ENCODE measurements at regions of chr4 and their contacts with region 1.

Region 1: DNA sequence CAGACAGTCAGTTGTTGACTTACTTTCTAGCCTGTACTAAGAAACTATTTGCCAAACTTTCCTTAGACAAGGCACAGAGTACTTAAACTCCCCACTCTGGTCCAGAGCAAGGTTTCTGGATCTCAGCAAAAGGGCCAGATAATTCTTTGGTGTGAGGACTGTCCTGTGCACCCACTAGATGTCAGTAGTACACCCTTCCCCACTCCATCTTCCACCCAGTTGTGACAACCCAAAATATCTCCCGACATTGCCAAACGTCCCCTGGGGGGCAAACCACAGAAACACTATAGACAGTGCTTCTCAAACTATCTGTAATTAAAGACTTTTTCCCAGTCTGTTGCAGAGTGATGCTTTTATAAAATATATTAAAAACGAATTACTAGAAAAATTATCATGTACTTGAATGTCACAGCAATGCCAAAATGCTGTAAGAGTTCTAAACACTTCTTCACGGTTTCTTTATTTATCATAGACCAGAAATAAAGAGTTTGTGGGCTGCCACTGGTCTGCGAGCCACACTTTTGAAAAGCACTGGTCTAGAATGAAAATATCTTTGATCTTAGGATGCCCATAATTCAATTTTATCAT is 203.5 kb downstream of the PRDM5 start:
- DNase-seq: peak in 4 of 14 experiments; percentile 17 to 53 (median 37)
- ATAC-seq: no peak
- H3K4me3 ChIP-seq: no peak overlapping the region
- H3K4me3 Mint-ChIP-seq: no peak overlapping the region
- H3K27ac ChIP-seq: no peak overlapping the region
- H3K27ac Mint-ChIP-seq: no peak overlapping the region
- H3K4me1 ChIP-seq: no peaks in the 10 kb centered on the region
- H3K4me1 Mint-ChIP-seq: no peaks in the 10 kb centered on the region
- H3K27me3 ChIP-seq: no peaks in the 10 kb centered on the region
- H3K27me3 Mint-ChIP-seq: peaks cover 15% of the 10 kb centered on the region
- CTCF ChIP-seq: peak; percentile 51

Region 2: GRCh38 chr4:120472447-120473131 is 246.5 kb before region 1 on chr4:
- CTCF ChIA-PET with region 1: no interaction called
- POLR2A ChIA-PET with region 1: no interaction called
- intact Hi-C with region 1: no loop called
- DNase-seq: no peak
- ATAC-seq: no peak
- H3K4me3 ChIP-seq: no peak overlapping the region
- H3K4me3 Mint-ChIP-seq: no peak overlapping the region
- H3K27ac ChIP-seq: no peak overlapping the region
- H3K27ac Mint-ChIP-seq: no peak overlapping the region
- H3K4me1 ChIP-seq: no peaks in the 10 kb centered on the region
- H3K4me1 Mint-ChIP-seq: no peaks in the 10 kb centered on the region
- H3K27me3 ChIP-seq: no peaks in the 10 kb centered on the region
- H3K27me3 Mint-ChIP-seq: no peaks in the 10 kb centered on the region
- CTCF ChIP-seq: no peak

Region 3: DNA sequence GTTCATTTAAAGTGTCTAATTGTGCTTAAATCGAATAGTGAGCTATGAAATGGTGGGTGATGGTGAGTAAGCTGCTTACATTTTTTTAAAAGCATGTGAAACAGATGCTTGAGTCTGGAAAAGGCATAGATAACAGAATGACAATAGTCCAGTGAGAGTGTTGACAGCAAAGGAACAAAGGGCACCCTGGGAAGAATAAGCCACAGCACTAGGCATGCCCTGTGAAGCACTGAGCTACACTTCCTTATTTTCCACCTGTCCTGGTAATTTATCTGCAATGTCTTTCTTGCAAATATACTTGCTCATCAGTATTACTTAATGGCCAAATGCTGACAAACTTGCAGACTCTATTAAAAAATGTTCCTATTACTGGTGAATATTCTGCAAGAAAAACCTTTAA is 34.8 kb after region 1 on chr4:
- CTCF ChIA-PET with region 1: no interaction called
- POLR2A ChIA-PET with region 1: no interaction called
- intact Hi-C with region 1: no loop called
- DNase-seq: no peak
- ATAC-seq: no peak
- H3K4me3 ChIP-seq: no peak overlapping the region
- H3K4me3 Mint-ChIP-seq: no peak overlapping the region
- H3K27ac ChIP-seq: no peak overlapping the region
- H3K27ac Mint-ChIP-seq: no peak overlapping the region
- H3K4me1 ChIP-seq: no peaks in the 10 kb centered on the region
- H3K4me1 Mint-ChIP-seq: no peaks in the 10 kb centered on the region
- H3K27me3 ChIP-seq: no peaks in the 10 kb centered on the region
- H3K27me3 Mint-ChIP-seq: no peaks in the 10 kb centered on the region
- CTCF ChIP-seq: no peak

Region 4: GRCh38 chr4:121096629-121097028 is 377.6 kb after region 1 on chr4:
- CTCF ChIA-PET with region 1: no interaction called
- POLR2A ChIA-PET with region 1: no interaction called
- intact Hi-C with region 1: loop called (anchors 1 to 2 kb)
- DNase-seq: peak in 3 of 14 experiments; percentile 38 to 52 (median 41)
- ATAC-seq: no peak
- H3K4me3 ChIP-seq: no peak overlapping the region
- H3K4me3 Mint-ChIP-seq: no peak overlapping the region
- H3K27ac ChIP-seq: no peak overlapping the region
- H3K27ac Mint-ChIP-seq: no peak overlapping the region
- H3K4me1 ChIP-seq: no peaks in the 10 kb centered on the region
- H3K4me1 Mint-ChIP-seq: no peaks in the 10 kb centered on the region
- H3K27me3 ChIP-seq: no peaks in the 10 kb centered on the region
- H3K27me3 Mint-ChIP-seq: no peaks in the 10 kb centered on the region
- CTCF ChIP-seq: peak; percentile 77

Region 5: DNA sequence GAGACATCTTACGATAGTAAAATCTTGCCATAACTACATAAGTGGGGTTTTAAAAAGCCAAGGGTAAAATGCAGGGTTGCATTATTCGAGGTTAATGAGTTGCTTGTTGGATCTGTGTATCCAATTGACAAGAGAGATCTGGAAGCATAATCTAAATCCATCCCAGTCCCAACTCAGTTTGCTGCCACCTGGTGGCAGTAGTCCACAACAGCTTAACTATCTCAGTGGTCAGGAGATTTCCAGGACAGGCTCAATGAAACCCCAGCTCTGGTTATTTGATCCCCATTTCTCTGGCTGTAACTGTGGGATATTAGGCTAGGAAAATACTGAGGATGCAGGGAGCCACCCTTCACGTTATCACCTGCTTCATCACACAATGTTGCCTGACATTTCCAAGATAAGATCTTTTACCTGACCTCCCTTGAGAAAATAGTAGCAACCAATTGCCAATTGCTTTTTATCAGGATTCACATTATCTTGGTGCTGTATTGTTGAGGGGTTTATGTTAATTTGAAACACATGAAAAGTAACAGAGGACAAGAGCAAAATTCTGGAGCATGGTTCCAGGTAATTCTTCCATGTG is 533.2 kb after region 1 on chr4:
- CTCF ChIA-PET with region 1: no interaction called
- POLR2A ChIA-PET with region 1: no interaction called
- intact Hi-C with region 1: loop called in 1 of 2 experiments (anchors 5 kb)
- DNase-seq: peak; percentile 21 to 78 (median 44)
- ATAC-seq: peak; percentile 27
- H3K4me3 ChIP-seq: no peak overlapping the region
- H3K4me3 Mint-ChIP-seq: no peak overlapping the region
- H3K27ac ChIP-seq: no peak overlapping the region
- H3K27ac Mint-ChIP-seq: no peak overlapping the region
- H3K4me1 ChIP-seq: peaks cover 35% of the 10 kb centered on the region
- H3K4me1 Mint-ChIP-seq: peaks cover 54% of the 10 kb centered on the region
- H3K27me3 ChIP-seq: no peaks in the 10 kb centered on the region
- H3K27me3 Mint-ChIP-seq: no peaks in the 10 kb centered on the region
- CTCF ChIP-seq: peak; percentile 76

Region 6: DNA sequence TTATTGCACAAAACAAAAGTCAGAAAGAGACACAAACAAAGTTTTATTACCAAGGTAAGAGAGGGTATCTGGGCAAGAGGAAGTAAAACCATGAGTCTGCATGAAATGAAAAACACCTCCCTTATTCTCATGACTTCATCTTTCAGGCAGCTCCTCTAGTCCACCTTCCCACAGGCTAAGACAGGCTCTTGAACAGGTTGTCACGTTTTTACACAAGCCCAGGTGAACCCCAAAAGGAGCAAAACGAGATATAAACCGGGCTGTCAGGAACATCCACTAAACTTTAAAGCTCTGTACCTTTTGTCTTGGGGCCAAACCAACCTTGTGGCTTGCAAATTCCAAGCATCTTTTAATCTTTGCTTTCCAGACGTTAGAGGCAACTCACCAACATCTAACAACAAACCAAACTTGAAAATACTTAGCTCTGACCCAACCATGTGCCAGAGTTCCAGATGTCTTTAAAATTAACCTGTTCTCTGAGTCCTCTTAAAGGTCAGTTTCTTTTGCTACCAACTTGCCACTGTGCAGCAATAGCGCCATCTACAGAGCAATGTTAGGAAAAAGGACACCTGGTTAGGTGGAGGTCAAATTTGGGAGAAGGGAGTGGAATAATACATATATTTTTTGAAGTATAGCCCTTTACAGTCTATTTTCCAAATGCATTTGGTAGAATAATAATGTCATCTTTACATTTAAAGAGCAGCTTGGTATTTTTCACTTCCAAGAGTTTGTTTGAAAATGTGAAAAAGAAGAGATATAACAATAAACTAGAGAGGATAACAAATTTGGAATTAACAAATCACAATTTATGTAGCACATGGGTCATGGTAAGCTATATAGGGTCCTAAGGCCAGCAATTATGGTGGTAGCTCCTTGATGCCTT is 588.6 kb after region 1 on chr4:
- CTCF ChIA-PET with region 1: no interaction called
- POLR2A ChIA-PET with region 1: no interaction called
- intact Hi-C with region 1: loop called (anchors 5 kb)
- DNase-seq: peak in 10 of 14 experiments; percentile 2 to 77 (median 26)
- ATAC-seq: no peak
- H3K4me3 ChIP-seq: no peak overlapping the region
- H3K4me3 Mint-ChIP-seq: no peak overlapping the region
- H3K27ac ChIP-seq: no peak overlapping the region
- H3K27ac Mint-ChIP-seq: no peak overlapping the region
- H3K4me1 ChIP-seq: peaks cover 5% of the 10 kb centered on the region
- H3K4me1 Mint-ChIP-seq: peaks cover 15% of the 10 kb centered on the region
- H3K27me3 ChIP-seq: no peaks in the 10 kb centered on the region
- H3K27me3 Mint-ChIP-seq: peaks cover 4% of the 10 kb centered on the region
- CTCF ChIP-seq: peak; percentile 81